ENCODE measurements at regions of chr17 and their contacts with region 1.

Region 1: GRCh38 chr17:28726226-28727130 is at the start of gene TLCD1:
- DNase-seq: peak; percentile 84
- H3K4me3 ChIP-seq: peak within 1 kb of the TSS; percentile 71
- H3K27ac ChIP-seq: peak within 1 kb of the TSS; percentile 77
- H3K27me3 ChIP-seq: no peaks in the 10 kb centered on the region
- CTCF ChIP-seq: peak; percentile 98
- polyA plus RNA-seq, gene TLCD1: 11.8 and 13.1 TPM in 2 replicates

Region 2: DNA sequence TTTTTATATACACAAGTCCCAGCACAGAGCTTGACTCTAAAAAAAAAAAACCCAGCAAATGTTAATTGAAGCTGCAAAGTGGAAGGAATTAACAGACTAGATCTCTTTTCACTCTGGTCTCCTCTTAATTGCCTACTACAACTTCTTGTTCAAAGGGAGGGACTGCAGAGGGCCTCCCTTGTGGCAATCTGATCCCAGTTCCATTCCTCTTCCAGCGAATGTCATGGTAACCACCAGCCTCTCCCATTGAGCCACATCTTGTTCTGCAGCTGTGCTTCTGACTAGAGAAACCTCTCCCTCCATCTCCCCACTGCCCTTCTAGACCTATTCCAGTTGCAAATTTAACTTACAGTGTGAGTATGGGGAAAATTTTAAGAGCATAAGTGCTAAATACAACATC is 58.6 kb before region 1 on chr17:
- CTCF ChIA-PET with region 1: no interaction called
- POLR2A ChIA-PET with region 1: no interaction called
- DNase-seq: no peak
- H3K4me3 ChIP-seq: no peak overlapping the region
- H3K27ac ChIP-seq: no peak overlapping the region
- H3K27me3 ChIP-seq: no peaks in the 10 kb centered on the region
- CTCF ChIP-seq: no peak

Region 3: DNA sequence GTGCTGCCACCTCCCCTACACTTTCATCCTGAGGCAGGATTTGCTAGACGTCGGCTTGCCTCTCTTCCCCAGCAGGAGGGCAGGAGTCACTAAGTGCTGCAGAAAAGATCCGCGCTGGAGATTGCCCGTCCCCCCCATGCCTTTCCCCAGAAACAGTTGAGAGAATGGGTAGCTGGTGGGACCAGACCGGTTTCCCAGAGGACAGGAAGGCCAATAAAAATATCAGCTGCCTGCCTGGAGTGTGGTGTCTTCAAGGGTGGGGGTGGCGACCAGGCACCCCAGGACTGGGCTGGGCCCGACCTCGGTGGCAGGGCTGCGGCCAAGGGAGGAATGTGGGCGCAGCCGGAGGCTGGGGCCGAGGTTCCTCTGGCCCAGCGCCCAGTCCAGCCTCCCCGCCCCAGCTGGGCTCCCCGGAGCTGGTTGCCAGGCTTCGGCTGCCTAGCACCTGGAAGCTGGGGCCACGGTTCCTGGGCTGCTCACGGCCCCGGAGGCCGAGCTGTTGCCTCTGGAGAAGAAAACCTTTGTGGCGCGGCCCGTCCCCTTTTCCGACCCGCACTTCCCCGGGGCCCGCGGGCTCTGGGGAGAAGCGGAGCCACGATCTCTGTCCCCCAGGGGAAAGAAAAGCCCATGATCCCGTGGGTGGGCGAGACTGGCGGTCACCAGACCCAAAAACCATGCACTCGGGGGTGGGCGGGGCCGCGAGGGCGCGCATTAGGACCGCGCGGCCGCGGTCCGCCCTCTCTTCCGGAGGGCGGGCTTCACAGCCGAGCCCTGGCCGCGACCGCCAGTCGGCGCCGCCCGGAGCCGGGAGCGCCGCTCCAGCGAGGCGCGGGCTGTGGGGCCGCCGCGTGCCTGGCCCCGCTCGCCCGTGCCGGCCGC is 17.0 kb after region 1 on chr17 and contains the start of gene TRAF4:
- CTCF ChIA-PET with region 1: interaction called, 193 read pairs
- POLR2A ChIA-PET with region 1: interaction called, 93 read pairs
- DNase-seq: no peak
- H3K4me3 ChIP-seq: peak within 1 kb of the TSS; percentile 88
- H3K27ac ChIP-seq: peak within 1 kb of the TSS; percentile 95
- H3K27me3 ChIP-seq: no peaks in the 10 kb centered on the region
- CTCF ChIP-seq: 0 out of 2 replicates have a peak, but pooled peaks have one; percentile 5
- polyA plus RNA-seq, gene TRAF4: 26.1 and 38.8 TPM in 2 replicates

Region 4: DNA sequence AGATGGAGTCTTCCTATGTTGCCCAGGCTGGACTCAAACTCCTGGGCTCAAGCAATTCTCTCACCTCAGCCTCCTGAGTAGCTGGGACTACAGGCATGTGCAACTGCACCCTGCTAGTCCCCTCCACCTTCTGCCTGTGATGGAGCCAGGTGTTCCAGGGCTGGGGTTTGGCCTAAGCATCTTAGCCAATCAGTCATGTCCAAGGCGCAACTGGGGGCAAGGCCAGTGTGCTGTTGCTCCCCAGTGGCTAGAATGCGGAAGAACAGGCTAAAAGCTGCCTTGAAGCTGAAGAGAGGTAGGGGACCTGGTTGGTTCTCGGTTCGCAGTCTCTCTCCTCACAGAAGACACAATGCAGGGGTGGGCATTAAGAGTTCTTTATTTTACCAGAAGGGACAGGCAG is 152.5 kb after region 1 on chr17:
- CTCF ChIA-PET with region 1: interaction called, 12 read pairs
- POLR2A ChIA-PET with region 1: no interaction called
- DNase-seq: no peak
- H3K4me3 ChIP-seq: no peak overlapping the region
- H3K27ac ChIP-seq: no peak overlapping the region
- H3K27me3 ChIP-seq: no peaks in the 10 kb centered on the region
- CTCF ChIP-seq: peak; percentile 54

Region 5: GRCh38 chr17:28916302-28916934 is 189.9 kb after region 1 on chr17:
- CTCF ChIA-PET with region 1: interaction called, 10 read pairs
- POLR2A ChIA-PET with region 1: no interaction called
- DNase-seq: no peak
- H3K4me3 ChIP-seq: no peak overlapping the region
- H3K27ac ChIP-seq: no peak overlapping the region
- H3K27me3 ChIP-seq: no peaks in the 10 kb centered on the region
- CTCF ChIP-seq: peak; percentile 54

Region 6: DNA sequence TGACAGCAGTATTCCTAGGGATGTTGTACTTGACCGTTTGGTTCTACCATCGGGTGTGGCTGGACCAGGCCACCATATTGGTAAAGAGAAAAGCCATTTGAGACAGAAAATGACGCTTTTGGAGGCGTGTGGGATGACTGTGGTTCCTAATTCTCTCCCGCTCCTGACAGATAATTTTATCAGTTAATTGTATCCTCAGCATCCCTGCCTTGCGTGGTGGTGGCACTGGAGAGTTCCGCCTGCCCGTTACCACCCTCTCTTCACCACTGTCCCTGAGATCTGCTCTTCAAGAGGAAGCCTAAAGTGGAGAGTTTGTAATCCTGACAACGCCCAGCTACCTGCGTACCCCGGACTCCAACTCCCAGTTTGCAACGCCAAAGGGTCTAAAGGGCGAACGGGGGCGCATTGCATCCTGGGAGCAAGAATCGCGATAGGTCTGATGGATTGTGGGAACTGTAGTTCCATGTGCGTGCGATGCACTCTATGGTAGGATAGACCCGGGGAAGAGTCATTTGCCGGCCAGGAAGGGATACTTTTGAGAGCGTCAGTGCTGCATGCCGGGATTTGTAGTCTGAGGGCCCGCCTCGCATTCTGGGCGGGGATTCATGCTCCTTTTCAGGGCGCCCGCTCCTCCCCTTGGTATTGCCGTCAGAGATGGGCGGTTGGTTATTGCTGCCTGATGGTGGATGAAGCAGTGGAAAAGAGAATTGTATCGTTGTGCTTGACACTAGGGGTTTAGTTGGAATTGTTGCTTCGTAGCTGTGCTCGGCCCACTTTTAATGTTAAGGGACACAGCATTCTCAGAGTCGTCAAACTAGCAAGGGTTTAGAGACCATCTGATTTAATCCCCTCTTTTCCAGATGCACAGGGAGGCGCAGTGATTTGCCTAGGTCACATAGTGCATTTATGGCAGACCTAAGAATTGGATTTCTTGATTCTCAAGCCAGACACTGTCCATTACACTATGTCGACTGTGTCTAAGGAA is 225.8 kb after region 1 on chr17:
- CTCF ChIA-PET with region 1: interaction called, 66 read pairs
- POLR2A ChIA-PET with region 1: interaction called, 27 read pairs
- DNase-seq: peak; percentile 99
- H3K4me3 ChIP-seq: peak overlapping the region; percentile 77
- H3K27ac ChIP-seq: peak overlapping the region; percentile 98
- H3K27me3 ChIP-seq: no peaks in the 10 kb centered on the region
- CTCF ChIP-seq: no peak

Region 7: DNA sequence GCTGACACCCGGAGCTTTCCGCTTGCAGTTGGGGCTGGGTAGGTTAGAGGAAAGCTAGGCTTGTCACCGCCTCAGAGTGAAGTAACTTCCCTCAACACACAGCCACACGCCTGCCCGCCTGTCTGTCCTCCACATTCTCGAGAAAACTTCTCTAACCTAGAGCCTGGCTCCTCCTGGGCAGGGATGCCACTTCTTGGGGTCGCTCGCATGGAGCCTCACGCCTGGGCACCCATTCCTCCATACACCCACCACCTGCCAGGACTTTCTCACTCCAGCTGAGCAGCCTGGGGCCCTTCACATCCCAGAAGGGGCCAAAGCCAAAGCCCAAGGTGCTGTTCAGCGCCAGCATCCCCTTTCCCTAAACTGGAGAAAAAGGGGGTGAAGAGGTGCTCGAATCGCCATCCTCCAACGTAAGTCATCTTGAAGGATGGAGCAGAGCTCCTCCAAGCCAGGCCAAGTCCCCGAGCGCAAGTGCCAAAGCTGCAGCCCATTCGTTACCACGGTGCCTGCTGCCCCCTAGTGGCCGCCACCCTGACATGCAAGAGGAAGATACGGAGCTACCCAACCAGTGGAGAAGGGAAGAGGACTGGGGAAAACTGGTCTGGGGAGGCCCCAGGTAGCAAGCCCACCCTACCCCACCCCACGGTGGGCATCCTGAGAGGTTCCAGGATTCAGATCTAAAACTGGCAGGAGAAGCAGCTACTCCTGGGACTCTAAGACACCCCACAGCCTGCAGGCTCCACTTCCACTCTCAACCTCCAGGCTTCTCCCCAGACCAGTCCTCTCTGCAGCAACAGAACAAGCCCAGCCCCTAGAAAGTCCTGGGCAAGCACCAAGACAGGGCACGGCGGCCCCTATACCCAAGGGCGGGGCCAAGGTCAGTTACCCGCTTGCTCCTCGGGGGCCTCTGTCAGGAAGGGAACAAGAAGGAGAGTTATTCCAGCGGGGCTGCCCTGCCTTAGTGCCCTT is 390.6 kb after region 1 on chr17:
- CTCF ChIA-PET with region 1: interaction called, 10 read pairs
- POLR2A ChIA-PET with region 1: no interaction called
- DNase-seq: no peak
- H3K4me3 ChIP-seq: no peak overlapping the region
- H3K27ac ChIP-seq: no peak overlapping the region
- H3K27me3 ChIP-seq: no peaks in the 10 kb centered on the region
- CTCF ChIP-seq: peak; percentile 83

Measured in AG04450 (cell line).